ENCODE measurements at regions of chr1 and their contacts with region 1.

Region 1: DNA sequence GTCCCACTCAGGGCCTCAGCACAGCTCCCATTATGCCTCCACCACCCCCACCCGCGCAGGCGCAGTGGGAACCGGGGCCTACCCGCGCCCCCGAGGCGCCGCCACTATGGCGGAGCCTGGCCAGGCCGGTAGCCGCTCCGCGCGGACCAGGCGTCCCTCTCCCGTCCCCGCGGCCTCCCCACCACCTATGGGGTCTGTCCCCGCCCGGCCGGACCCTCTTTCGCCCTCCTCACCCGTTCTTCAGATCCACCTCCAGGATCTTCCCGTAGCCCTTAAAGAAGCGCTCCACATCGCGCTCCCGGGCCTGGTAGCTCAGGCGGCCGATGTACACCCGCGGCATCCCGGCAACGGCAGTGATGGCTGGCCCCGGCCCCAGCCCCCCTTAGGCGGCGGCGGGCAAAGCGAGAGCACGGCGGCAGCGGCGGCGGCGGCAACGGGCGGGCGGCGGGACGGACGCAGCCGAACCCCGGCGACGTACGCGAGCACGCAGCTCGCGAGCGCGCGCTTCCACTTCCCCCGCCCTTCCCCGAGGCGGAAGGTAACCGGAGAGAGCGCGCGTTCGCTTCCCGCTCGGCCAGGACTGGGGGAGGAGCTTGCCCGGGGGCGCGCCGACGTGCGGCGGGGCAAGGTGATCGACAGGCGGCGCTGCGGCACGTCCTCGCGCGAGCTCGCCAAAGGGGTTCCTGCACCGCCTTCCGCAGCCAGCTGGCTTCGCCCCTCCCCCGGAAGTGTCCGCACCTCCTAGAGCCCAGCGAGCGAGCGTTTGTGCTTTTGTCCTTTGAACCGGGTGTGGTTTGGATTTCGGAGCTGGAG is at the start of gene SRSF4:
- DNase-seq: peak; percentile 98
- H3K4me3 ChIP-seq: peak within 1 kb of the TSS; percentile 86 to 95
- H3K27ac ChIP-seq: peak within 1 kb of the TSS; percentile 98 to 99
- H3K4me1 ChIP-seq: peaks cover 10 to 23% of the 10 kb centered on the region in 2 experiments; a peak in 3 of 4 replicates
- H3K27me3 ChIP-seq: no peaks in the 10 kb centered on the region
- CTCF ChIP-seq: peak; percentile 59
- EP300 ChIP-seq: no peak
- RAD21 ChIP-seq: peak; percentile 47
- polyA plus RNA-seq, gene SRSF4: 55.3 and 62.6 TPM in 2 replicates

Region 2: GRCh38 chr1:28965271-28965870 is 216.2 kb before region 1 on chr1:
- CTCF ChIA-PET with region 1: no interaction called
- POLR2A ChIA-PET with region 1: no interaction called
- DNase-seq: no peak
- H3K4me3 ChIP-seq: no peak overlapping the region
- H3K27ac ChIP-seq: no peak overlapping the region
- H3K4me1 ChIP-seq: no peaks in the 10 kb centered on the region; a peak in 1 of 4 replicates
- H3K27me3 ChIP-seq: no peaks in the 10 kb centered on the region
- CTCF ChIP-seq: no peak
- EP300 ChIP-seq: no peak
- RAD21 ChIP-seq: no peak

Region 3: GRCh38 chr1:29124366-29125236 is 57.0 kb before region 1 on chr1:
- CTCF ChIA-PET with region 1: interaction called, 5 read pairs
- POLR2A ChIA-PET with region 1: interaction called, 11 read pairs
- DNase-seq: peak; percentile 96
- H3K4me3 ChIP-seq: peak overlapping the region; percentile 69 to 71
- H3K27ac ChIP-seq: peak overlapping the region; percentile 43 to 55; a peak in 3 of 4 replicates
- H3K4me1 ChIP-seq: peaks cover 0 to 9% of the 10 kb centered on the region in 2 experiments; a peak in 1 of 4 replicates
- H3K27me3 ChIP-seq: no peaks in the 10 kb centered on the region
- CTCF ChIP-seq: peak; percentile 71
- EP300 ChIP-seq: no peak
- RAD21 ChIP-seq: no peak

Region 4: GRCh38 chr1:29171089-29171488 is 10.5 kb before region 1 on chr1:
- CTCF ChIA-PET with region 1: interaction called, 24 read pairs
- POLR2A ChIA-PET with region 1: interaction called, 14 read pairs
- DNase-seq: no peak
- H3K4me3 ChIP-seq: no peak overlapping the region
- H3K27ac ChIP-seq: no peak overlapping the region
- H3K4me1 ChIP-seq: peaks cover 3 to 19% of the 10 kb centered on the region in 2 experiments; a peak in 3 of 4 replicates
- H3K27me3 ChIP-seq: no peaks in the 10 kb centered on the region
- CTCF ChIP-seq: no peak
- EP300 ChIP-seq: no peak
- RAD21 ChIP-seq: no peak

Region 5: DNA sequence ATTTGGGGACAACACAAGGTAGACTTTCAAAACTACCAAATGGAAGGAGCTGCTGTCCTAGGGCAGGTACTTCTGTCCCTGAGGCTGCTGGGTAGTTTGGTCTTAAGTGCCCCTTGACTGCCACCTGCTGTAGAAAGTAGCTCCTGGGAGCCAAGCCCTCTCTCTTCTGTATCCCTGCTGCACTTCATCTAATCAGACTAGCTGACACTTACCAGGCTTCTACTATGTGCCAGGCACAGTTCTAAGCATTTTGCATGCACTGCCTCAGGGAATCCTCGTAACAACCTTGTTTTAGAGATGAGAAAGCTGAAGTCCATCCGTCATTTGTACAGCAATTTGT is 15.9 kb after region 1 on chr1:
- CTCF ChIA-PET with region 1: interaction called, 22 read pairs
- POLR2A ChIA-PET with region 1: interaction called, 22 read pairs
- DNase-seq: peak; percentile 61
- H3K4me3 ChIP-seq: no peak overlapping the region
- H3K27ac ChIP-seq: peak overlapping the region in 1 of 2 experiments; percentile 71; a peak in 2 of 4 replicates
- H3K4me1 ChIP-seq: peaks cover 16 to 18% of the 10 kb centered on the region in 2 experiments; a peak in 2 of 4 replicates
- H3K27me3 ChIP-seq: no peaks in the 10 kb centered on the region
- CTCF ChIP-seq: peak; percentile 57
- EP300 ChIP-seq: no peak
- RAD21 ChIP-seq: peak; percentile 58

Region 6: GRCh38 chr1:29202584-29203340 is 21.1 kb after region 1 on chr1:
- CTCF ChIA-PET with region 1: interaction called, 22 read pairs
- POLR2A ChIA-PET with region 1: interaction called, 22 read pairs
- DNase-seq: peak; percentile 90
- H3K4me3 ChIP-seq: no peak overlapping the region; a peak in 1 of 4 replicates
- H3K27ac ChIP-seq: peak overlapping the region; percentile 62 to 83
- H3K4me1 ChIP-seq: peaks cover 9 to 12% of the 10 kb centered on the region in 2 experiments; a peak in 2 of 4 replicates
- H3K27me3 ChIP-seq: no peaks in the 10 kb centered on the region
- CTCF ChIP-seq: peak; percentile 98
- EP300 ChIP-seq: peak in 1 of 2 experiments; percentile 21; a peak in 1 of 4 replicates
- RAD21 ChIP-seq: peak; percentile 97

Region 7: GRCh38 chr1:29271724-29272123 is 90.1 kb after region 1 on chr1:
- CTCF ChIA-PET with region 1: no interaction called
- POLR2A ChIA-PET with region 1: no interaction called
- DNase-seq: no peak
- H3K4me3 ChIP-seq: no peak overlapping the region
- H3K27ac ChIP-seq: no peak overlapping the region
- H3K4me1 ChIP-seq: peaks cover 3 to 10% of the 10 kb centered on the region in 2 experiments; a peak in 2 of 4 replicates
- H3K27me3 ChIP-seq: no peaks in the 10 kb centered on the region
- CTCF ChIP-seq: no peak
- EP300 ChIP-seq: no peak
- RAD21 ChIP-seq: no peak

Measured in SK-N-SH (cell line).